ENCODE measurements at regions of chr12 and their contacts with region 1.

Region 1: GRCh38 chr12:109518820-109519665 is 41.6 kb downstream of the UBE3B start:
- DNase-seq: peak; percentile 31
- H3K4me3 ChIP-seq: no peak overlapping the region
- H3K27ac ChIP-seq: no peak overlapping the region
- H3K4me1 ChIP-seq: no peaks in the 10 kb centered on the region
- H3K27me3 ChIP-seq: no peaks in the 10 kb centered on the region
- CTCF ChIP-seq: peak; percentile 87 to 89

Region 2: DNA sequence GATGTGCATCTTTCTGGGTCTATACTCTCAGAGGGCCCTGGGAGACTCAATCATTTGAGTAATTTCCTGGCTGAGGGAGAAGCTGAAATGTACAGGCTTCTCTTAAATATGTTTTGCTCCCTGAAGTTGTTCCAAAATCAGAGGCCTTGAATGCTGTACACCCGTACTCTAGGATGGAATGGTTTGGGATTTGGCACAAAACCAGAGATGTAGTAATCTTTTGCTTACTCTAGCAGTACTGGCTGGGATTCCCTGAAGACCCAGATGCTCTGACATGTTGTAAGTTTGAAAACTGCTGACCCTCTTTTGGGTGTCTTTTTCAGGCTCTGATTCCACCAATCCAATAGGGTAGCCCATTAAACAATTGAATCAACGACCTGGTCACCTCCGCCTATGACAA is 392.3 kb before region 1 on chr12:
- CTCF ChIA-PET with region 1: no interaction called
- dilution Hi-C with region 1: no loop called
- in situ Hi-C with region 1: no loop called
- intact Hi-C with region 1: no loop called
- DNase-seq: no peak
- H3K4me3 ChIP-seq: no peak overlapping the region
- H3K27ac ChIP-seq: no peak overlapping the region
- H3K4me1 ChIP-seq: no peaks in the 10 kb centered on the region
- H3K27me3 ChIP-seq: no peaks in the 10 kb centered on the region
- CTCF ChIP-seq: no peak

Region 3: GRCh38 chr12:109302358-109302757 is 216.7 kb before region 1 on chr12:
- CTCF ChIA-PET with region 1: interaction called, 10 read pairs
- dilution Hi-C with region 1: no loop called
- in situ Hi-C with region 1: no loop called
- intact Hi-C with region 1: no loop called
- DNase-seq: peak; percentile 9
- H3K4me3 ChIP-seq: no peak overlapping the region
- H3K27ac ChIP-seq: no peak overlapping the region
- H3K4me1 ChIP-seq: peaks cover 6% of the 10 kb centered on the region
- H3K27me3 ChIP-seq: peaks cover 3% of the 10 kb centered on the region
- CTCF ChIP-seq: peak; percentile 14 to 28

Region 4: GRCh38 chr12:109582658-109583057 is 63.6 kb after region 1 on chr12:
- CTCF ChIA-PET with region 1: no interaction called
- dilution Hi-C with region 1: no loop called
- in situ Hi-C with region 1: no loop called
- intact Hi-C with region 1: loop called (anchors 1 kb)
- DNase-seq: peak; percentile 51
- H3K4me3 ChIP-seq: no peak overlapping the region
- H3K27ac ChIP-seq: peak overlapping the region; percentile 81
- H3K4me1 ChIP-seq: peaks cover 22% of the 10 kb centered on the region
- H3K27me3 ChIP-seq: no peaks in the 10 kb centered on the region
- CTCF ChIP-seq: peak in 1 of 2 donors; percentile 34

Region 5: DNA sequence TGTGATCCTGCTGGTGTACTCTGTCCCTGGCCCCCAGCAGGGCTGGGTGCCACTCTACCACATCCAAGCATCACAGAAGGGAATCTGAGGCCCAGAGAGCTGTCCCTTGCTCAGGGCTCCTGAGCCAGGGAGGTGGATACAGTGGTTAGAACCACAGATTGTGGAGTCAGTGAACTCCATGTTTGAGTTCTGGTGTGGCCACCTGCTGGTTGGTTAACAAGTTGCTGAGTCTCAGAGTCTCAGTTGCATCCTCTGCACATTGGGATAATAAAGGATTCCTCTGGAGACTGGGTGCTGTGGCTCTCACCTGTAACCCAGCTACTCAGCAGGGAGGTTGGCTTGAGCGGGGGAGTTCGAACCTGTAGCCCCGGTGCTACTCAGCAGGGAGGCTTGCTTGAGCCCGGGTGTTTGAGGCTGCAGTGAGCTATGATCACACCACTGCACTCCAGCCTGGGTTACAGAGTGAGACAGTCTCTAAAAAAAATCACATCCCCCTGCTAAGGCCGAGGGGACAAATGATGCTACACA is 94.0 kb after region 1 on chr12:
- CTCF ChIA-PET with region 1: no interaction called
- dilution Hi-C with region 1: no loop called
- in situ Hi-C with region 1: no loop called
- intact Hi-C with region 1: loop called (anchors 1 kb)
- DNase-seq: peak; percentile 29
- H3K4me3 ChIP-seq: no peak overlapping the region
- H3K27ac ChIP-seq: no peak overlapping the region
- H3K4me1 ChIP-seq: peaks cover 2% of the 10 kb centered on the region
- H3K27me3 ChIP-seq: no peaks in the 10 kb centered on the region
- CTCF ChIP-seq: peak; percentile 39 to 41

Region 6: DNA sequence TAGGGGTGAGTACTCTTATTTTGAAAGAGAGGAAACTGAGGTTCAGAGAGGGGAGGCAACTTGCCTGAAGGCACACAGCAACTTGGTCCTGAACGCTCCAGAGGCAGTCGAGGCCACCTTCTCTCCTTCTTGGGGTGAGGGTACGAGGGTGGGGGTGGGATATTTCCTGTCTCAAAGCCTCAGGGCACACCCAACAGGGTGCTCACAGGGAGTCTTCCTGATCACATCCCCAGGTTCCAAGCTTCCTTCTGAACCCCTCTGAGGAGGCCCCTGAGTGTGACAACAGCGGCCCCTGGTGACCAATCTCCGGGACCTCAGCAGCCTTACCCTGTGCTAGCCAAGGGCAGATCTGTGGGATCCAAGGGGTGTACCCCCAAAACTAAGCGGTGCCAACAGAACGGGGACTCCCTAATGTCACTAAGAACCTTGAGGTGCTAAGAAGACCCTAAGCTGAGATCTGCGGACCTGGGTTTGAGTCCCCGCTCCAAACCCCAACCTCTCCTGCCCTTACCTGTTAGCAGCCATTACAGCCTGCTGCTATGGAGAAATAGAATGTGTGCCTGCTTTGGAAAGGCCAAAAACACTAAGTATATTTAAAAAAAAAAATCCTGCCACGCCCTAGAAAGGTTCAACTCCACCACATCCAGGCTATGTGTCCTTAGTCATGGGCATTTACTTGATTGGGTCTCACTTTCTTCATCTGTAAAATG is 256.3 kb after region 1 on chr12:
- CTCF ChIA-PET with region 1: no interaction called
- dilution Hi-C with region 1: no loop called
- in situ Hi-C with region 1: loop called (anchors 5 to 10 kb)
- intact Hi-C with region 1: loop called (anchors 1 kb)
- DNase-seq: peak; percentile 52
- H3K4me3 ChIP-seq: no peak overlapping the region
- H3K27ac ChIP-seq: no peak overlapping the region
- H3K4me1 ChIP-seq: peaks cover 18% of the 10 kb centered on the region
- H3K27me3 ChIP-seq: no peaks in the 10 kb centered on the region
- CTCF ChIP-seq: peak; percentile 94 to 97

Measured in mammary epithelial cell (primary cell).